Heart right ventricle (tissue), 16 donors: ENCODE measurements at regions of chr14 and their contacts with region 1.

Region 1: GRCh38 chr14:95561001-95561412 is 26.2 kb downstream of the GLRX5 start:
- DNase-seq: peak; percentile 75 to 79
- ATAC-seq: peak; percentile 85 to 90 (median 87)
- H3K4me3 ChIP-seq: no peak overlapping the region
- H3K27ac ChIP-seq: no peak overlapping the region
- H3K4me1 ChIP-seq: peaks cover 0 to 4% (median 0%) of the 10 kb centered on the region in 9 donors
- H3K27me3 ChIP-seq: peaks cover 0 to 6% (median 0%) of the 10 kb centered on the region in 7 donors
- CTCF ChIP-seq: peak; percentile 75 to 94 (median 93)

Region 2: DNA sequence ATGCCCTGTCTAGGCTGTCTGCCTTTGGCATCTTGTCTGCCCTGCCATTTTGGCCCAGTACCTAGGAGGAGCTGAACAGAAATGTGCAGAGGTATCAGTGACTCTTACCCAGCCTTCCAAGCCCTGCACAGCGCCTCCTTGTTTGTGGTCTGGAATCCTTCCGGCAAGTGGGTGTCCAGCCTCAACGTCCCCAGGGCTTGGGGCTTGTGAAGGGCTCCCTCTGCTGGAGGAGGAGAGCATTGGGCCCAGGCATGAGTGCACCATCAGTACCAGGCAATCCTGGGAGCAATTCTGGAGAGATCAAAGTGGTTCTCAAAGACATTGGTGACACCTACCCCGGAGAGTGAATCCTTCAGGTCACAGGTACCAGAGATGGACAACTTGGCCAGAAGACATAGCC is 122.8 kb after region 1 on chr14:
- intact Hi-C with region 1: loop called in 1 of 10 experiments (anchors 10 kb)
- DNase-seq: no peak
- ATAC-seq: no peak
- H3K4me3 ChIP-seq: no peak overlapping the region
- H3K27ac ChIP-seq: no peak overlapping the region
- H3K4me1 ChIP-seq: no peaks in the 10 kb centered on the region
- H3K27me3 ChIP-seq: peaks cover 0 to 41% (median 15%) of the 10 kb centered on the region in 7 donors
- CTCF ChIP-seq: peak in 4 of 9 donors; percentile 27 to 62 (median 36)

Region 3: GRCh38 chr14:95774265-95775160 is 213.5 kb after region 1 on chr14:
- intact Hi-C with region 1: loop called (anchors 1 to 5 kb)
- DNase-seq: peak in 1 of 2 donors; percentile 33
- ATAC-seq: no peak
- H3K4me3 ChIP-seq: no peak overlapping the region
- H3K27ac ChIP-seq: no peak overlapping the region
- H3K4me1 ChIP-seq: no peaks in the 10 kb centered on the region
- H3K27me3 ChIP-seq: peaks cover 0 to 24% (median 10%) of the 10 kb centered on the region in 7 donors
- CTCF ChIP-seq: peak; percentile 57 to 92 (median 85)

Region 4: GRCh38 chr14:96100161-96101029 is 539.4 kb after region 1 on chr14:
- intact Hi-C with region 1: loop called in 1 of 10 experiments (anchors 10 kb)
- DNase-seq: peak; percentile 54 to 73
- ATAC-seq: peak in 5 of 8 donors; percentile 42 to 76 (median 67)
- H3K4me3 ChIP-seq: no peak overlapping the region
- H3K27ac ChIP-seq: no peak overlapping the region
- H3K4me1 ChIP-seq: peaks cover 0 to 3% (median 0%) of the 10 kb centered on the region in 9 donors
- H3K27me3 ChIP-seq: peaks cover 0 to 32% (median 26%) of the 10 kb centered on the region in 7 donors
- CTCF ChIP-seq: peak; percentile 46 to 91 (median 80)

Region 5: GRCh38 chr14:96275177-96276112 is 714.4 kb after region 1 on chr14:
- intact Hi-C with region 1: loop called in 8 of 10 experiments (anchors 2 to 10 kb)
- DNase-seq: peak; percentile 52 to 73
- ATAC-seq: peak in 6 of 8 donors; percentile 50 to 77 (median 65)
- H3K4me3 ChIP-seq: no peak overlapping the region
- H3K27ac ChIP-seq: peak overlapping the region in 1 of 10 donors; percentile 29
- H3K4me1 ChIP-seq: peaks cover 0 to 10% (median 4%) of the 10 kb centered on the region in 9 donors
- H3K27me3 ChIP-seq: no peaks in the 10 kb centered on the region
- CTCF ChIP-seq: peak; percentile 75 to 98 (median 90)